ENCODE measurements at regions of chr7 and their contacts with region 1.

Region 1: DNA sequence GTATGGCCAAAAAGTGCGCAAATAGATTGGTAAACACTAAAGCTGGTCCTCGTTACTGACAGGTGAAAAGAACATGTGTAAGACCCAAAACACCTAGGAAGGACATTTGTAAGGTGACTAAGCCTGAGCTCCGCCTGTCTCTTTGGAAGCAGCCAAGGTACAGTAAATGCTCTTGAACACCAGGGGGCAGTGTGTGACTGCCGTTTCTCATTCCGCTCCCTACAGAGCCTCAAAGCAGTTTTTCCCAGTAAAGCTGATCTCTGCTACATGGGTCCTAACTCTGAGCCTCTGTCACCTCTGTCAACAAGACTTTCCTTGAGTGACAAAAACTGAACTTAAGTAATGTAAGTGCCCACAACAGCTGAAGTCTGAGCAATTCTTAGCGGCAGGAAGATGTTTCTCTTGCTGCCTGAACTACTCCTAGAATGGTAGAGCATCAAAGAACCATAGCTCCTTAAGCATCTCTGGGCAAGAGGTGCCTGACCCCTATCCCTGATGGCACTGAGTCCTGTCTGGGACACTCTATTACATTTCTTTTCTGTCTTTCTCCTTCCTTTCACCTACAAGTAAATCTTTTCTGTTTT is 238.0 kb upstream of the INHBA start:
- DNase-seq: peak in 8 of 9 experiments; percentile 29 to 69 (median 46)
- ATAC-seq: peak; percentile 75
- H3K4me3 ChIP-seq: no peak overlapping the region
- H3K4me3 Mint-ChIP-seq: no peak overlapping the region
- H3K27ac ChIP-seq: no peak overlapping the region
- H3K27ac Mint-ChIP-seq: no peak overlapping the region
- H3K4me1 ChIP-seq: peaks cover 4% of the 10 kb centered on the region
- H3K4me1 Mint-ChIP-seq: peaks cover 10% of the 10 kb centered on the region
- H3K27me3 ChIP-seq: no peaks in the 10 kb centered on the region
- H3K27me3 Mint-ChIP-seq: peaks cover 23% of the 10 kb centered on the region
- CTCF ChIP-seq: peak; percentile 75

Region 2: DNA sequence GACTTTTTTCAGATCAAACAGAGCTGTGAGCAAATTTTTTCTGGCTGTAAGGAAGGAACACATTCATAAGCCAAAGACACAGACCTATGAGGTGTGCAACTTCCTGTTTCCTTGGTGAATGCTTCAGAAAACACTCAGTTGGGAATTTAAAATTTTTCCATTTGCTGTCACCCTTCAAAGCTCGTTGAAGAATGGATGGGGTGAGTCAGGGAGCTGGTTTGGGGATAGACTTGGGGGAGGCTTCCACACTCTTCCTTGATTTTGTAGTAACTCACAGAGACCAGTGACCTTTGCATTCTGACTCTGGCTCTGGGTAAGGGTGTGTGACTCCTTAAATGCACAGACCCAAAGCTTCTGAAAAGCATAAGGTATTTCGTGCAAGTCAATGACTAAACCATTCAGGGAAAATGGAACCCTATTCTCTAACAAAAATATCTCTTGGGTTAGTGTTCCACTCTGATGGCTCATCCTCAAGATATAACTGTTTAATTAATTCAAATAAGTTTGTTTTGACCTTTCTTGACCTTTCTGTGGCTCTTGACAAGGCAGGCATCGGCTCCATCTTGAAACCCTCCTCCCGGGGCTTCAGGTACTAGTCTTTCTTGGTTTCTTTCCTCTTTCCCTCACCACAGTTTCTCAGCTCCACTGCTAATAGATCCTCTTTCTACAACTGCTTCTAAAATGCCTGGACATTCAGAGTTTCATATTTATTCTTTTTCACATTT is 10.2 kb before region 1 on chr7:
- CTCF ChIA-PET with region 1: interaction called, 11 read pairs
- POLR2A ChIA-PET with region 1: interaction called, 3 read pairs
- intact Hi-C with region 1: no loop called
- DNase-seq: no peak
- ATAC-seq: no peak
- H3K4me3 ChIP-seq: no peak overlapping the region
- H3K4me3 Mint-ChIP-seq: no peak overlapping the region
- H3K27ac ChIP-seq: no peak overlapping the region
- H3K27ac Mint-ChIP-seq: no peak overlapping the region
- H3K4me1 ChIP-seq: no peaks in the 10 kb centered on the region
- H3K4me1 Mint-ChIP-seq: no peaks in the 10 kb centered on the region
- H3K27me3 ChIP-seq: no peaks in the 10 kb centered on the region
- H3K27me3 Mint-ChIP-seq: peaks cover 9% of the 10 kb centered on the region
- CTCF ChIP-seq: no peak

Region 3: DNA sequence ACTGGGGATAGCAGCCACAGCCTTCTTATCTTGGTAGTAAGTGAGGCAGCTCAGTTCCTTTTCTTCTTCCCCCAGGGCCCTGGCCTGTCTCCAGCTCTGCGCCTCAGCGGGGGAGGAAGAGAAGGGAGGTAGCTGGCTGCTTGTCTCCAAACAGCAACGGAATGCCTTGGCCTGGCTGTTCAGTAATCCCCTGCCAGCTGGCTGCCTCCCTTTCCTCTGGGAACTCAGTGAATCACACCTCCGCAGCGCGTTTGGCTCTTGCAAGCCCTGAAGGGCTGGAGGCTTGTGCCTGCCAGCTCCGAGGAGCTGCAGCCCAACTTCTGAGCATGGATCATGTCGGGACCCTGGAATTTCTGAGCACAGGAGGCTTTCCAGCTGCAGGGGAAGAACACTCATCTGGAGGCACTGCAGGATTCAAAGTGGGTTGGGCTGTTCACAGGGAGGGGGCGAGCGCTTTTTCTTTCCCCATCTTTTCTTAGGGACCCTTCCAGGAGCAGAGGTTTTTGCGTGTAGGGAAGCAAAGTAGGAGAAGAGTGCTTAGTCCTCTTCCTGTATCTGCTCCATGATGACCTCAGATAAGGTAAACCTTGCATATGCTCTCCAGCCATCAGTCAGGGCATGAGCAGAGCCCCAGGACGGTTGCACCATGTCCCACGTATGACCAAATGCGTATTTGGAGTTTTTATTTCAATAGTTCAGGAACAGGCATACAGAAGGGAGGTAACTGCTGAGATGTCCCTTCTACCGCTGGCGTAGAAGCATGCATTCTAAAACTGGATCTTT is 15.2 kb after region 1 on chr7:
- CTCF ChIA-PET with region 1: interaction called, 21 read pairs
- POLR2A ChIA-PET with region 1: no interaction called
- intact Hi-C with region 1: no loop called
- DNase-seq: no peak
- ATAC-seq: no peak
- H3K4me3 ChIP-seq: no peak overlapping the region
- H3K4me3 Mint-ChIP-seq: no peak overlapping the region
- H3K27ac ChIP-seq: no peak overlapping the region
- H3K27ac Mint-ChIP-seq: no peak overlapping the region
- H3K4me1 ChIP-seq: no peaks in the 10 kb centered on the region
- H3K4me1 Mint-ChIP-seq: no peaks in the 10 kb centered on the region
- H3K27me3 ChIP-seq: no peaks in the 10 kb centered on the region
- H3K27me3 Mint-ChIP-seq: peaks cover 35% of the 10 kb centered on the region
- CTCF ChIP-seq: no peak

Region 4: DNA sequence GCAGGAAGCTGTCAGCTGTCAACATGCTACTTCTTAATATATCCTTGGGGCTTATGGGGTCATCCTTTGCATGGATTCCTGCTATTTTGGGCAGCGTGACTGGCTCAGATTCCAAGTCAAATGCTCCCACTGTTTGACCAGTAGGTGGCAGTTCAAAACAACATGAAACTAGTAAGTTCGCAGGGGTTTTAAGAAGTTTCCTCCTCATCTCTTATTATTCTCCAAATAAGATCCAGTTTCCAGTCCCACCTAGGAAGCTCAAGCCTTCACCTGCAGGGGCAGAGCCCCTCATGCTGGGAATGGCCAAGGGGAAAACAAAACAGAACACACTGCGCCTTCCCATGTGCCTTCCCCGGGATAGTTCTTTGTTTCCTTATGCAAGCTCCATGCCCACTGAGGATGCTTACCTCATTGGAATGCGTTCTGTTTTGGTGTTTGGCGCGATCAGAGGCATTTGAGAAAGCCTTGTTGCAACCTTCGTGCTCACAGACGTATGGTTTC is 36.3 kb after region 1 on chr7:
- CTCF ChIA-PET with region 1: interaction called, 14 read pairs
- POLR2A ChIA-PET with region 1: no interaction called
- intact Hi-C with region 1: loop called in 1 of 2 experiments (anchors 1 kb)
- DNase-seq: peak in 1 of 9 experiments; percentile 16
- ATAC-seq: no peak
- H3K4me3 ChIP-seq: no peak overlapping the region
- H3K4me3 Mint-ChIP-seq: no peak overlapping the region
- H3K27ac ChIP-seq: no peak overlapping the region
- H3K27ac Mint-ChIP-seq: no peak overlapping the region
- H3K4me1 ChIP-seq: no peaks in the 10 kb centered on the region
- H3K4me1 Mint-ChIP-seq: no peaks in the 10 kb centered on the region
- H3K27me3 ChIP-seq: no peaks in the 10 kb centered on the region
- H3K27me3 Mint-ChIP-seq: peaks cover 11% of the 10 kb centered on the region
- CTCF ChIP-seq: no peak

Region 5: GRCh38 chr7:42940985-42941847 is 1000.4 kb after region 1 on chr7:
- CTCF ChIA-PET with region 1: no interaction called
- POLR2A ChIA-PET with region 1: no interaction called
- intact Hi-C with region 1: loop called in 1 of 2 experiments (anchors 5 kb)
- DNase-seq: peak; percentile 53 to 80 (median 71)
- ATAC-seq: peak; percentile 80
- H3K4me3 ChIP-seq: no peak overlapping the region
- H3K4me3 Mint-ChIP-seq: no peak overlapping the region
- H3K27ac ChIP-seq: no peak overlapping the region
- H3K27ac Mint-ChIP-seq: no peak overlapping the region
- H3K4me1 ChIP-seq: no peaks in the 10 kb centered on the region
- H3K4me1 Mint-ChIP-seq: peaks cover under 1% of the 10 kb centered on the region
- H3K27me3 ChIP-seq: no peaks in the 10 kb centered on the region
- H3K27me3 Mint-ChIP-seq: no peaks in the 10 kb centered on the region
- CTCF ChIP-seq: peak; percentile 90

Region 6: DNA sequence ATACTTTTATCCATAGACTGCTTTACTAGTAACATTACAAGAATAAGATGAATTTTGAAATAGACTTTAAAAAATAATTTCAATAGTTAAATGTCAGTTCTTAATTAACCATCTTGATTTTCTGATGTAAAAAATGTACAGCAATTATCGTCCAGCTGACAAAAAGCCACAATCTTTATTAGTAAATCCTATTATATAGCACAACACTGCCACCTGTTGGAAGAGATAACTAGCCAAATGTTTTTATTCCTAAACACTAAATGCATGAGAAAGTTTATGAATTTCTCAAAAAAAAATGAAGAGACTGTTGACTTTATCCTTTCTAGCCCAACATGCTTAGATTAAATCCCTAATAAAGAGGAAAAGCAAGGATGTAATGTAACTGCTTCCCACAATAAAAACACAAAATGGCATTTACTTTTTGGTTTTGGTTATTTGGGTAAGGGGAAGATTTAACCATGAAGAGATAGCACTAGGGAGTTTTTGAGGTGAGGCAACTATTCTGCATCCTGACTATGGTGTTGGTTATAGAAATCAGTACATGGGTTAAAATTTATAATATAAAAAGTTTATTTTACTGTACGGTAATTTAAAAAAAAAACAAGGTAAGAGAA is 1780.4 kb after region 1 on chr7:
- CTCF ChIA-PET with region 1: no interaction called
- POLR2A ChIA-PET with region 1: no interaction called
- intact Hi-C with region 1: loop called (anchors 5 to 10 kb)
- DNase-seq: peak in 3 of 9 experiments; percentile 22 to 76 (median 69)
- ATAC-seq: peak; percentile 31
- H3K4me3 ChIP-seq: no peak overlapping the region
- H3K4me3 Mint-ChIP-seq: no peak overlapping the region
- H3K27ac ChIP-seq: no peak overlapping the region
- H3K27ac Mint-ChIP-seq: no peak overlapping the region
- H3K4me1 ChIP-seq: no peaks in the 10 kb centered on the region
- H3K4me1 Mint-ChIP-seq: peaks cover 54% of the 10 kb centered on the region
- H3K27me3 ChIP-seq: no peaks in the 10 kb centered on the region
- H3K27me3 Mint-ChIP-seq: no peaks in the 10 kb centered on the region
- CTCF ChIP-seq: peak; percentile 95

Region 7: GRCh38 chr7:43729214-43729923 is 1788.5 kb after region 1 on chr7 and contains the start of gene COA1:
- CTCF ChIA-PET with region 1: no interaction called
- POLR2A ChIA-PET with region 1: no interaction called
- intact Hi-C with region 1: loop called (anchors 5 to 10 kb)
- DNase-seq: peak; percentile 61 to 93 (median 81)
- ATAC-seq: peak; percentile 92
- H3K4me3 ChIP-seq: peak within 1 kb of the TSS; percentile 81 to 89
- H3K4me3 Mint-ChIP-seq: peak within 1 kb of the TSS; percentile 93
- H3K27ac ChIP-seq: peak within 1 kb of the TSS; percentile 70 to 74
- H3K27ac Mint-ChIP-seq: peak within 1 kb of the TSS; percentile 90
- H3K4me1 ChIP-seq: peaks cover 31% of the 10 kb centered on the region
- H3K4me1 Mint-ChIP-seq: peaks cover 42% of the 10 kb centered on the region
- H3K27me3 ChIP-seq: no peaks in the 10 kb centered on the region
- H3K27me3 Mint-ChIP-seq: no peaks in the 10 kb centered on the region
- CTCF ChIP-seq: no peak
- total RNA-seq, gene COA1: 95.8 to 96.7 TPM

Measured in CD8-positive, alpha-beta T cell (primary cell).